Pancreas (tissue), 10 donors: ENCODE measurements at regions of chr10 and their contacts with region 1.

Region 1: GRCh38 chr10:80429521-80429966 is 21.2 kb downstream of the PRXL2A start:
- DNase-seq: peak in 1 of 6 donors; percentile 34
- ATAC-seq: peak; percentile 38 to 80 (median 72)
- H3K4me3 ChIP-seq: no peak overlapping the region
- H3K27ac ChIP-seq: no peak overlapping the region
- H3K4me1 ChIP-seq: no peaks in the 10 kb centered on the region
- H3K27me3 ChIP-seq: no peaks in the 10 kb centered on the region
- CTCF ChIP-seq: no peak

Region 2: DNA sequence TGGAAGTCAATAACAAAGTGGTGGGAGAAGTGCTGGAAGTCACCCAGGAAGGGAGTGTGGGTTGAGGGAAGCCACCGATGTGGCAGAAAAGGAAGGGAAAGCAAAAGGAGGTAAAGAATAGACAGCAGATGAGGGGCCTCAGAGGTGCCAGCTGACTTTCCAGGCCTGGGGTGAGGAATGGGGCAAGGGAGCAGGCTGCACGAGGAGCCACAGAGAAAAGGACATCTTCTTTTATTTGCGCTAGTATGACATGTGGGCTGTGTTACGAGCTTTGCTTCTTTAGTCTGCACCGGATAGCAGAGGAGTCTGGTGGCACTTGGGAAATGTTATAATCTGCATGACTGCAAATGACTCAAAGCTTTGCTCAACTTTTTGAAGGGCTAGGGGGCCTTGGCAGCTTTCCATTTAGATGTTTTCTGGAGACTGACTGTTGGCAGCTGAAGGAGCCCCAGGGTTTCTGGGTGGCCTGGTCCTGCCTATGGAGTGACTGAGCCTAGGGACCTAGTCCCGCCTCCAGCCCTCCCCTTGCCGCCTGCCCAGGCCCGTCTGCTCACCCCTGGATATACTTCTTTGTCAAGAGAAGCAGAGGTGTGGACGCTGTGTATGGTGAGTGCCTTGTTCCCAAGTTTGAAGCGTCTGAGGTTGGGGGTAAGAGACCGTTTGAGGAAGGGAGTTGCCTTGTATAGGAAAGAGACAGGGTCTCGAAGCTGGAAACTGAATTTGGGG is 16.1 kb before region 1 on chr10:
- intact Hi-C with region 1: loop called in 1 of 3 experiments (anchors 2 kb)
- DNase-seq: no peak
- ATAC-seq: peak in 1 of 4 donors; percentile 10
- H3K4me3 ChIP-seq: no peak overlapping the region
- H3K27ac ChIP-seq: peak overlapping the region in 2 of 4 donors; percentile 29 to 33
- H3K4me1 ChIP-seq: peaks cover 0 to 14% (median 7%) of the 10 kb centered on the region in 3 donors
- H3K27me3 ChIP-seq: no peaks in the 10 kb centered on the region
- CTCF ChIP-seq: no peak